CD4-positive, alpha-beta T cell (primary cell): ENCODE measurements at regions of chr4 and their contacts with region 1.

Region 1: DNA sequence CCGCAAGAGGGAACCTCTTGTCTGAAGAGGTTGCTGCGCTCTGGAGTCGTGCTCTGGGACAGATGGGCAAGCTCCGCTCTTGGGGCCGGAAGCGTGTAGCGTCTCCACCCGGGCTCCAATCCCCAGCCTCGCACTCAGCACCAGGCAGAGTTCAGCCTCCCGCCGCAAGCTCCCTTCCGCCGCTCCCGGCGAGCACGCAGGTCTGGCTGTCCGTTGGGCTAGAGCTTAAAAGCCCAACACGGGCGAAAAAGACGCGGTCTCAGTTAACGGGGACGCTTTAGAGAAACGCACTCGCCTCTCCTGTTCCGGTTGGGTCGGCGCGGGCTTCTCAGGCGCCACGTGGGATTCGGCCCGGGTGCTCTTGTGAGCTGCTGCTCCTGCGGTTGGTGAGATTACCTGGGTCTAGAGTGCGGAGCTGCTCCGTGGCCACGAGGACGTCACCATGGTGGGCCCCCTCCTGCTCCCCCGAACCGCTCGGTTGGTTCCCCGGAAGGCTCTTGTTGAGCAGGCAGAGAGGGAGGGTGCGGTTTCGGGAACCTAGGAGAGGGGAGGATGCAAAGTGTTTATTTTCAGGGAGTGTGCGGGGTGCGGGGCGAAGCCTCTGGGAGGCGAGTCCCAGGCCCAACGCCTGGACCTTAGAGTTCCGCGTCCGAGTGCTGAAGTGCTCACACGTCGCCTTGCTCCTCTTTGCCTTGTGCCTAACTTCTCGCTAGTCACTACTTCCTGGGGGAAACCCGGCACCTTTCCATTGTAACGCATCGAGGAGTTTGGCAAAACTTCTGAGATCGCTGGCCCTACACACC is at the start of gene TMA16:
- DNase-seq: peak; percentile 58 to 90 (median 71)
- ATAC-seq: peak; percentile 74
- H3K4me3 ChIP-seq: peak within 1 kb of the TSS; percentile 94
- H3K4me3 Mint-ChIP-seq: peak within 1 kb of the TSS; percentile 100
- H3K27ac ChIP-seq: peak within 1 kb of the TSS; percentile 70 to 71
- H3K27ac Mint-ChIP-seq: peak within 1 kb of the TSS; percentile 96
- H3K4me1 ChIP-seq: peaks cover 7% of the 10 kb centered on the region
- H3K4me1 Mint-ChIP-seq: peaks cover 36% of the 10 kb centered on the region
- H3K27me3 ChIP-seq: no peaks in the 10 kb centered on the region
- H3K27me3 Mint-ChIP-seq: no peaks in the 10 kb centered on the region
- CTCF ChIP-seq: no peak
- total RNA-seq, gene TMA16: 6.2 to 6.3 TPM

Region 2: DNA sequence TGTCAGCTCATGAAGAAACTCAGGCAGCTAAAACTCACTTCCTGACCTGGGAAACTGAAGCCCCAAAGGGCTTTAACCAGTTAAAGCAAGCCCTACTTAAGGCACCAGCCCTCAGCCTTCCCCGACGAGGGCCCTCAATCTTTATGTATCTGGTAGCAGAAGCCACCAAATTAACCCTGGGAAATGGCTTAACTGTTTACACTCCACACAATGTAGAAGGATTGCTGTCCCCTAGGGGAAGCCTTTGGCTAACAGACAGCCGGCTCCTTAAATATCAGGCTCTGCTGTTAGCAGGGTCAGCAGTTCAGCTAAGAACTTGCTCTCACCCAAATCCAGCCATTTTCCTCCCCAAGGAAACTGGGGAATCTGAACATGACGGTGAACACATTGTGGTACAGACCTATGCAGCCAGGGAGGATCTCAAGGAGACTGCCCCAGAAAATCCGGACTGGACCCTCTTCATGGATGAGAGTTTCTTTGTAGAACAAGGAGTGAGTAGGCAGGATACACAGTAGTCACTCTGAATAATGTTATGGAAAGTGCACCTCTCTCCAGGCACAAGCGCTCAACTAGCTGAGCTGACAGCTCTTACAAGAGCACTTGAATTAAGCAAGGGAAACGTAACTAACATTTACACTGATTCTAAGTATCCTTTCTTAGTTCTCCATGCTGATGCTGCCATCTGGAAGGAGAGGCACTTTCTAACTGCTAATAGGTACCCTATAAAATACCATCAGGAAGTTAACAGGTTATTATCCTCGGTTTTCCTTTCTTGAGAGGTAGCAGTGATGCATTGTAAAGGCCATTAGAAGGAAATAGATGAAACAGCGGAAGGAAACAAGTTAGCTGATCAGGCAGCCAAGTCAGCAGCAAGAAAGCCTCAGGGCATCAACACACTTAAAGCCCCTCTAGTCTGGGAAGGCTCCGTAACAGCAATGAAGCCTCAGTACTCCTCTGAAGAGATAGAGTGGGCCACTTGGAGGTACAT is 318.3 kb before region 1 on chr4:
- CTCF ChIA-PET with region 1: no interaction called
- POLR2A ChIA-PET with region 1: no interaction called
- intact Hi-C with region 1: loop called in 1 of 2 experiments (anchors 5 kb)
- DNase-seq: no peak
- ATAC-seq: no peak
- H3K4me3 ChIP-seq: no peak overlapping the region
- H3K4me3 Mint-ChIP-seq: no peak overlapping the region
- H3K27ac ChIP-seq: no peak overlapping the region
- H3K27ac Mint-ChIP-seq: no peak overlapping the region
- H3K4me1 ChIP-seq: no peaks in the 10 kb centered on the region
- H3K4me1 Mint-ChIP-seq: peaks cover 5% of the 10 kb centered on the region
- H3K27me3 ChIP-seq: peaks cover 0 to 5% of the 10 kb centered on the region in 2 experiments
- H3K27me3 Mint-ChIP-seq: peaks cover 20% of the 10 kb centered on the region
- CTCF ChIP-seq: no peak

Region 3: GRCh38 chr4:163221467-163221866 is 273.1 kb before region 1 on chr4:
- CTCF ChIA-PET with region 1: no interaction called
- POLR2A ChIA-PET with region 1: no interaction called
- intact Hi-C with region 1: no loop called
- DNase-seq: no peak
- ATAC-seq: no peak
- H3K4me3 ChIP-seq: no peak overlapping the region
- H3K4me3 Mint-ChIP-seq: no peak overlapping the region
- H3K27ac ChIP-seq: no peak overlapping the region
- H3K27ac Mint-ChIP-seq: no peak overlapping the region
- H3K4me1 ChIP-seq: no peaks in the 10 kb centered on the region
- H3K4me1 Mint-ChIP-seq: no peaks in the 10 kb centered on the region
- H3K27me3 ChIP-seq: peaks cover 0 to 13% of the 10 kb centered on the region in 2 experiments
- H3K27me3 Mint-ChIP-seq: peaks cover 15% of the 10 kb centered on the region
- CTCF ChIP-seq: no peak

Region 4: GRCh38 chr4:165327211-165328100 is 1832.9 kb after region 1 on chr4 and contains the start of gene MSMO1:
- CTCF ChIA-PET with region 1: no interaction called
- POLR2A ChIA-PET with region 1: no interaction called
- intact Hi-C with region 1: loop called in 1 of 2 experiments (anchors 10 kb)
- DNase-seq: peak; percentile 94 to 99 (median 97)
- ATAC-seq: peak; percentile 95
- H3K4me3 ChIP-seq: peak within 1 kb of the TSS; percentile 95
- H3K4me3 Mint-ChIP-seq: no peak within 1 kb of the TSS
- H3K27ac ChIP-seq: peak within 1 kb of the TSS; percentile 70 to 79
- H3K27ac Mint-ChIP-seq: no peak within 1 kb of the TSS
- H3K4me1 ChIP-seq: peaks cover 33% of the 10 kb centered on the region
- H3K4me1 Mint-ChIP-seq: peaks cover 23% of the 10 kb centered on the region
- H3K27me3 ChIP-seq: no peaks in the 10 kb centered on the region
- H3K27me3 Mint-ChIP-seq: no peaks in the 10 kb centered on the region
- CTCF ChIP-seq: no peak
- total RNA-seq, gene MSMO1: 13.3 to 15.1 TPM